HCT116 (cell line): ENCODE measurements at regions of chr10 and their contacts with region 1.

Region 1: GRCh38 chr10:112434988-112435619 is 11.6 kb downstream of the ZDHHC6 start:
- DNase-seq: peak; percentile 55
- ATAC-seq: peak; percentile 65
- H3K4me3 ChIP-seq: no peak overlapping the region
- H3K27ac ChIP-seq: no peak overlapping the region
- H3K4me1 ChIP-seq: peaks cover 4 to 18% of the 10 kb centered on the region in 2 experiments; a peak in 3 of 4 replicates
- H3K27me3 ChIP-seq: no peaks in the 10 kb centered on the region
- CTCF ChIP-seq: peak; percentile 13 to 93 (median 82); a peak in 5 of 6 replicates
- POLR2A ChIP-seq: no peak
- RAD21 ChIP-seq: peak; percentile 98

Region 2: GRCh38 chr10:111756217-111757061 is 678.7 kb before region 1 on chr10:
- CTCF ChIA-PET with region 1: interaction called, 4 read pairs
- POLR2A ChIA-PET with region 1: no interaction called
- RAD21 ChIA-PET with region 1: no interaction called
- intact Hi-C with region 1: loop called (anchors 10 kb)
- DNase-seq: peak; percentile 79
- ATAC-seq: peak; percentile 98
- H3K4me3 ChIP-seq: no peak overlapping the region
- H3K27ac ChIP-seq: no peak overlapping the region
- H3K4me1 ChIP-seq: peaks cover 0 to 7% of the 10 kb centered on the region in 2 experiments; a peak in 2 of 4 replicates
- H3K27me3 ChIP-seq: peaks cover 8% of the 10 kb centered on the region; the same call in 1 of the 2 replicates
- CTCF ChIP-seq: peak; percentile 63 to 81 (median 70)
- POLR2A ChIP-seq: no peak
- RAD21 ChIP-seq: peak; percentile 76

Region 3: GRCh38 chr10:112115799-112116385 is 319.2 kb before region 1 on chr10:
- CTCF ChIA-PET with region 1: interaction called, 29 read pairs
- POLR2A ChIA-PET with region 1: no interaction called
- RAD21 ChIA-PET with region 1: no interaction called
- intact Hi-C with region 1: loop called (anchors 5 kb)
- DNase-seq: peak; percentile 42
- ATAC-seq: peak; percentile 98
- H3K4me3 ChIP-seq: no peak overlapping the region
- H3K27ac ChIP-seq: no peak overlapping the region
- H3K4me1 ChIP-seq: no peaks in the 10 kb centered on the region
- H3K27me3 ChIP-seq: peaks cover 4% of the 10 kb centered on the region
- CTCF ChIP-seq: peak; percentile 82 to 99 (median 97)
- POLR2A ChIP-seq: no peak
- RAD21 ChIP-seq: peak; percentile 73

Region 4: GRCh38 chr10:112183329-112184051 is 251.6 kb before region 1 on chr10 and contains the start of gene GPAM:
- CTCF ChIA-PET with region 1: interaction called, 21 read pairs
- POLR2A ChIA-PET with region 1: no interaction called
- RAD21 ChIA-PET with region 1: no interaction called
- intact Hi-C with region 1: loop called (anchors 5 kb)
- DNase-seq: peak; percentile 84
- ATAC-seq: peak; percentile 96
- H3K4me3 ChIP-seq: peak within 1 kb of the TSS; percentile 75 to 84
- H3K27ac ChIP-seq: peak within 1 kb of the TSS; percentile 33; the same call in 1 of the 2 replicates
- H3K4me1 ChIP-seq: peaks cover 3 to 16% of the 10 kb centered on the region in 2 experiments; a peak in 3 of 4 replicates
- H3K27me3 ChIP-seq: no peaks in the 10 kb centered on the region
- CTCF ChIP-seq: no peak
- POLR2A ChIP-seq: peak; percentile 94
- RAD21 ChIP-seq: no peak
- total RNA-seq, gene GPAM: 19.3 TPM

Region 5: DNA sequence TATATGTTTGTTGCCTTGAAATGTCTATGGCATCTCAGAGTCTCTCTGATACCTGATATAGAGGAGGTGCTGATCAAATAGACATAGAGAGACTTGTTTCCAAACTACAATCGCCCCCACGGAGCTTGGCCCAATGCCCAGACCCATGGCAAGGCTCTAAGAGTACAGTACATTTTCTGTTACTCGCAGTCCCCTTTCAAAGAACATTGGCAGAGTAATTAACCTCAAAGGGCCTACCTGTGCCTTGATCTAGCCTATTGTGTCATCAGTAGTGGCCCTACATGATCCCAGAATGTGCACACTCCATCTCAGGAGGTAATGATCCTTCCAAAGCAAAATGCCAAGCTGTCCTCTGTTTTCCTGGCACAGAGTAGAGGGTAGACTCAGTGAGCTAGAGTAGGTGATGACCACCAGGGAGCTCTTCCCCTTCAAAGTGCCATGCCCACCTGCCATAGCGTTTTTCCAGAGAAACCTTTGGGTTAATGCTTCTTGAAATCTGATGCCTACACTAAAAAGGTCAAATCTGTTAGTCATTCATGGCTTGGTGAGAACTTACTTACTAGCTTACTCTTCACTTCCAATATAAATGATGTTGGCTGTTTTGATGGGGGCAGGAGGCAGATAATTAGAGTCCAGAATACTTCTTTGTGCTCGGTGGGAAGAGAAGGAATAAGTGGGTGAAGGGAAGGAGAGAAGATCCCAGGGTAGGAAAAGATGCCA is 102.4 kb before region 1 on chr10:
- CTCF ChIA-PET with region 1: interaction called, 26 read pairs
- POLR2A ChIA-PET with region 1: interaction called, 3 read pairs
- RAD21 ChIA-PET with region 1: no interaction called
- intact Hi-C with region 1: no loop called
- DNase-seq: peak; percentile 94
- ATAC-seq: peak; percentile 75
- H3K4me3 ChIP-seq: peak overlapping the region in 1 of 2 experiments; percentile 29; a peak in 2 of 4 replicates
- H3K27ac ChIP-seq: peak overlapping the region; percentile 60
- H3K4me1 ChIP-seq: peaks cover 77 to 100% of the 10 kb centered on the region in 2 experiments
- H3K27me3 ChIP-seq: no peaks in the 10 kb centered on the region
- CTCF ChIP-seq: no peak
- POLR2A ChIP-seq: no peak
- RAD21 ChIP-seq: no peak

Region 6: GRCh38 chr10:112383325-112383724 is 51.8 kb before region 1 on chr10:
- CTCF ChIA-PET with region 1: interaction called, 14 read pairs
- POLR2A ChIA-PET with region 1: interaction called, 6 read pairs
- RAD21 ChIA-PET with region 1: interaction called in 1 of 2 experiments, 5 read pairs
- intact Hi-C with region 1: no loop called
- DNase-seq: peak; percentile 93
- ATAC-seq: peak; percentile 35
- H3K4me3 ChIP-seq: peak overlapping the region; percentile 2 to 35; a peak in 2 of 4 replicates
- H3K27ac ChIP-seq: peak overlapping the region; percentile 77
- H3K4me1 ChIP-seq: peaks cover 90 to 98% of the 10 kb centered on the region in 2 experiments
- H3K27me3 ChIP-seq: no peaks in the 10 kb centered on the region
- CTCF ChIP-seq: no peak
- POLR2A ChIP-seq: no peak
- RAD21 ChIP-seq: no peak